Activated CD4-positive, alpha-beta T cell treated with anti-CD3 and anti-CD28 coated beads for 36 hours (primary cell): ENCODE measurements at regions of chr19 and their contacts with region 1.

Region 1: GRCh38 chr19:3970808-3971598 is at the start of gene DAPK3:
- DNase-seq: peak; percentile 97
- ATAC-seq: peak; percentile 95
- H3K4me3 Mint-ChIP-seq: peak within 1 kb of the TSS; percentile 83
- H3K27ac Mint-ChIP-seq: peak within 1 kb of the TSS; percentile 58
- H3K4me1 Mint-ChIP-seq: peaks cover 22% of the 10 kb centered on the region
- H3K27me3 Mint-ChIP-seq: no peaks in the 10 kb centered on the region
- total RNA-seq, gene DAPK3: 26.7 to 27.6 TPM

Region 2: DNA sequence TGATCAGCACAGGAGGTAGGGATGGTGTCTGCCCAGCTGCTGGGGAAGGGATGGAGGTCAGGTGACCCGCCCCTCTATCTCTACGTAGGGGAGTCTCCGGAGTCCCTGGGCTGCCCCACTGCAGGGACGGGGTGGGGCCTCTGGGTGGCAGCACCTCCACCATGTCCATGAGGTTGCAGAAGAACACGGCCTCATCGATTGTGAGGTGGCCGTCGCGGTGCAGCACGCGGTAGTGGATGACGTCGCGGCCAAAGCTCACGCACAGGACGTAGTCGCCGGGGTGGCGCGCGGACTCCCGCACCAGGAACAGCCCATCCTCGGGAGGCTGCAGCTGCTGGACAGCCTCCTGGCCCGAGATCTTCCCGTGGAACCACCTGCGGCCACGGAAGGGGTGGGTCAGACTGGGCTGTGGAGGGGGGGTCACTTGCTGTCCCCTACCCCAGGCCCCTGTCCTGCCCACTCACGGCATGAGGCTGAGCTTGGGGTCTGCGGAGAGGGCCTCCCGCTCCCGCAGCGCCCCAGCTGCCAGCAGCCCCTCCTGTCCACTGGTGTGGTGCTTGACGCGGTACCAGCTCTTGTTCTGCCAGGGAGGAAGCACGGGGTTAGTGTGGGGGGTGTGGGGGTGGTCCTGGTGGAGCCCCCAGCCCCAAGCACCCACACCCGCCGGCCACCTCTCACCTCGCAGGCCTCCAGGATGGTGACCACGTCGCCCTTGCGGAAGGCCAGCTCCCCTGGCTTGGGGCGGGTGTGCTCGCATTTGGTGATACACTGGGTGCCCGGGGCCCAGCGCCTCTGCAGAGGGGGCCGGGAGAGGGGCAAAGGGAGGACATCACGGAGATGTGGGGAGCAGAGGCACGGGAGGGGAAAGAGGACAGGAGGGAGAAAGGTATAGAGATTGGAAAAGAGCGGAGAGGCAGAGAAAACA is 187.1 kb before region 1 on chr19:
- CTCF ChIA-PET with region 1: no interaction called
- POLR2A ChIA-PET with region 1: no interaction called
- intact Hi-C with region 1: loop called in 1 of 2 experiments (anchors 5 kb)
- DNase-seq: peak; percentile 72
- ATAC-seq: peak; percentile 65
- H3K4me3 Mint-ChIP-seq: peak overlapping the region; percentile 80
- H3K27ac Mint-ChIP-seq: no peak overlapping the region
- H3K4me1 Mint-ChIP-seq: peaks cover 3% of the 10 kb centered on the region
- H3K27me3 Mint-ChIP-seq: no peaks in the 10 kb centered on the region

Region 3: GRCh38 chr19:4007021-4007835 is 36.2 kb after region 1 on chr19 and contains the start of gene PIAS4:
- CTCF ChIA-PET with region 1: no interaction called
- POLR2A ChIA-PET with region 1: no interaction called
- intact Hi-C with region 1: loop called in 1 of 2 experiments (anchors 1 kb)
- DNase-seq: peak; percentile 97
- ATAC-seq: peak; percentile 92
- H3K4me3 Mint-ChIP-seq: peak within 1 kb of the TSS; percentile 75
- H3K27ac Mint-ChIP-seq: peak within 1 kb of the TSS; percentile 71
- H3K4me1 Mint-ChIP-seq: peaks cover 27% of the 10 kb centered on the region
- H3K27me3 Mint-ChIP-seq: no peaks in the 10 kb centered on the region
- total RNA-seq, gene PIAS4: 23.0 to 37.3 TPM

Region 4: GRCh38 chr19:4052050-4052999 is 81.3 kb after region 1 on chr19:
- CTCF ChIA-PET with region 1: no interaction called
- POLR2A ChIA-PET with region 1: no interaction called
- intact Hi-C with region 1: no loop called
- DNase-seq: no peak
- ATAC-seq: no peak
- H3K4me3 Mint-ChIP-seq: no peak overlapping the region
- H3K27ac Mint-ChIP-seq: no peak overlapping the region
- H3K4me1 Mint-ChIP-seq: peaks cover 34% of the 10 kb centered on the region
- H3K27me3 Mint-ChIP-seq: no peaks in the 10 kb centered on the region

Region 5: DNA sequence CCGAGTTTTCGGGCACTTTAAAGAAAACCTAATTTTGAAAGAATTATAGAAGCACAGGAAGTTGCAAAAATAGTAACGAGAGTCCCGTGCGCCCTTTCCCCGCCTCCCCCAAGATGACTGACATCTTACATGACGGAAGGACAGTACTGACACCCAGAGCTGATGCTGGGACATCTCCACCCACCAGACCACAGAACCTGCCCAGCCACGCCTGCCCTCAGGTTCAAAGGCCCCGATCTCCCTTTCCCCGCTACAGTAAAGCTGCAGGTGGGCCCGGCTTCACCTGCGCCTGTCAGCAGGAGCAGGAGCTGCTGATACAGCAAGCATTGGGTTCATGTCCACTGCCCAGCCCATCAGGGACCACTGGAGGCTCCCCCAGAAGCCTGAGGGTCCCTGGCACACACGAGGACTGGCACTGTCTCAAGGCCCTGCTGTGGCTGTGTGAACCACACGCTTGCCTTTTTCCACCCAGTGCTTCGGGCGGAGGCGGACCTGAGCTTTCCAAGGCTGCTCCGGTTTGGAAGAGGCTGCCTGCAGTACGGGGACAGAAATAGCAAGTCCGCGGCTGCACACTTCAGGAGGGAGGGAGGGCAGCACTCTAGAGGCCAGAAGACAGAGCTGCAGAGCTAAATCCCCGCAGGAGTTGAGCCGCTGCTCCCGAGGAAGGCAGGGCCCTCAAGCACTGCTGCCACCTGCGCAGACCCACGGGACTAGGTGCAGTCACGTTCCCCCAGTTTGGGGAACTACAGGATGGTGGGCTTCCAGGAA is 144.2 kb after region 1 on chr19:
- CTCF ChIA-PET with region 1: no interaction called
- POLR2A ChIA-PET with region 1: interaction called, 13 read pairs
- intact Hi-C with region 1: no loop called
- DNase-seq: peak; percentile 77
- ATAC-seq: peak; percentile 98
- H3K4me3 Mint-ChIP-seq: no peak overlapping the region
- H3K27ac Mint-ChIP-seq: peak overlapping the region; percentile 75
- H3K4me1 Mint-ChIP-seq: peaks cover 17% of the 10 kb centered on the region
- H3K27me3 Mint-ChIP-seq: no peaks in the 10 kb centered on the region

Region 6: DNA sequence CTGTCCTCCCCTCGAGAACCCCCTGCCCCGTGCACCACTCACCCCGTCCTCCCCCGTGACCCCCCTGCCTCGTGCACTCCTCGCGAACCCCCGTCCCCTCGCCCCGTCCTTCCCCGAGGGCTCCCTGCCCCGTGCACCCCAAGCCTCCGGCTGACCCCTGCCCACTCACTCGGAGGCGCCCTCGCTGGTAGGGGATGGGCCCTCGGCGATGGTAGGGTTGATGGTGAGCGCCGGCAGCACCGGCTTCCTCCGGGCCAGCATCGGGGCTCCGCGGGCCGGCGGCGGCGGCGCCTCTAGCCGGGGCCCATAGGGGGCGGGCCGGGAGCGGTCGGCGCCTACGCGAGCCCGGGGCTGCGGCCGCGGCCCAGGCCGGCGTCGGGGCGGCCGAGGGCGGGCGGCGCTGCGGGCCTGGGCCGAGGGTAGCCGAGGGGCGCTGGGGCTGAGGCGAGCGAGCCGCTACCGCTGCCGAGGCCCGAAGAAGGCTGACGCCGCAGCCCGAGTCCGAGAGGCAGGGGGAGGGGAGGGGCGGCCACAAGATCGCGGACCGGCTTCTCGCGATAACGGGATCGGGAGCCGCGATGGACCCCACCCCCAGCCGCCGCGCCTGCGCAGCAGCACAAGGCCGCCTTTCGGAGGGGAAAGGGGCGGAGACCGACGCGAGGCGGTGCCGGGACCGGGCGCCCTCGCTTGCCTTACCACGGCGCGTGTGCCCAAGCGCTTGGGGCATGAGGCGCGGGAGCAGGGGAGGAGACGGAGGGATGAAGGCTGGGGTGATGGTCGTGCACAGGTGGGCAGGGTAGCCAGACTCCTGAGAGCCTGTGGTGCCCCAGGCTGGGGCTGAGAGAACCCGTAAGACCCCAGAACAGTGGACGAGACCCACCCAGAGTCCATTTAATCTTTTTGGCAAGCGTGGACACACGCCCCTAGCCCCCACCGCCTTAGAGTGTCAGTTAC is 152.9 kb after region 1 on chr19 and contains the start of gene MAP2K2:
- CTCF ChIA-PET with region 1: no interaction called
- POLR2A ChIA-PET with region 1: no interaction called
- intact Hi-C with region 1: loop called in 1 of 2 experiments (anchors 1 kb)
- DNase-seq: peak; percentile 98
- ATAC-seq: peak; percentile 96
- H3K4me3 Mint-ChIP-seq: peak within 1 kb of the TSS; percentile 97
- H3K27ac Mint-ChIP-seq: peak within 1 kb of the TSS; percentile 92
- H3K4me1 Mint-ChIP-seq: peaks cover 18% of the 10 kb centered on the region
- H3K27me3 Mint-ChIP-seq: no peaks in the 10 kb centered on the region
- total RNA-seq, gene MAP2K2: 108 to 133 TPM

Region 7: DNA sequence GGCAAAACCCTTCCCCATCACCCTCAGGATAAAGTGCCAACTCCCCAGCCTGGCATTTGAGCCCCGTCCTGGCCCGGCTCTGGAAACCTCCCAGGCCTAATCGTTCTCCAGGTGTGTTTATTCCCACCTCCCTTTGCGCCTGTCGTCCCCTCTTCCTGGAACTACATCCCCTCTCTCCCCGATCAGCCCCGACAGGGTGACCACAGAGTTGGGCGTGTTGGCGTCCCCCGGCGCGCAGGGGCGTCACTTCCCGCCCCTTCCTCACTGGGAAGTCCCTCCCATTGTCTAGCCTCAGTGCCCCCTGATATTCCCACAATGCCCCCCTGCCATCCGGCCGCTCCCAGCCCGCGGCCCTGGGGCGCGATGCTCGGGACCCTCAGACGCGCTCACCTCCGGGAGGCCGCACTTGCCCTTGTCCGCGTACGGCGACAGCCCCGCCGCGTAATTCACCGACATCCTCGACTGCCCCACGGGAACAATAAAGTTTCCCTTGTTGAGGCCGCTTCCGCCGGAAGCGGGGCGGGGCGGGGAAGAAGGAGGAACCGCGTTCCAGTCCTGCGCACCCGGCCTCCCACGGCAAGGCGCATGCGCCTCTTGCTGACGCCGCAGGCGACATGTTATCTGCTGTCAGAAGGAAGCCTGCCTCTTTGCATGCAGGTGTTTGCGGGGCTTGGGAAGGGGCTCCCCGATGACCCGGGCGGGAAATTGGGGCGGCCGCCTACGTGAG is 211.2 kb after region 1 on chr19 and contains the starts of genes ANKRD24 and SIRT6:
- CTCF ChIA-PET with region 1: no interaction called
- POLR2A ChIA-PET with region 1: no interaction called
- intact Hi-C with region 1: loop called in 1 of 2 experiments (anchors 1 kb)
- DNase-seq: peak; percentile 98
- ATAC-seq: peak; percentile 84
- H3K4me3 Mint-ChIP-seq: peak within 1 kb of the TSS; percentile 92
- H3K27ac Mint-ChIP-seq: peak within 1 kb of the TSS; percentile 93
- H3K4me1 Mint-ChIP-seq: peaks cover 30% of the 10 kb centered on the region
- H3K27me3 Mint-ChIP-seq: no peaks in the 10 kb centered on the region
- total RNA-seq, gene ANKRD24: 1.1 to 1.3 TPM
- total RNA-seq, gene SIRT6: 26.2 to 29.4 TPM

Region 8: DNA sequence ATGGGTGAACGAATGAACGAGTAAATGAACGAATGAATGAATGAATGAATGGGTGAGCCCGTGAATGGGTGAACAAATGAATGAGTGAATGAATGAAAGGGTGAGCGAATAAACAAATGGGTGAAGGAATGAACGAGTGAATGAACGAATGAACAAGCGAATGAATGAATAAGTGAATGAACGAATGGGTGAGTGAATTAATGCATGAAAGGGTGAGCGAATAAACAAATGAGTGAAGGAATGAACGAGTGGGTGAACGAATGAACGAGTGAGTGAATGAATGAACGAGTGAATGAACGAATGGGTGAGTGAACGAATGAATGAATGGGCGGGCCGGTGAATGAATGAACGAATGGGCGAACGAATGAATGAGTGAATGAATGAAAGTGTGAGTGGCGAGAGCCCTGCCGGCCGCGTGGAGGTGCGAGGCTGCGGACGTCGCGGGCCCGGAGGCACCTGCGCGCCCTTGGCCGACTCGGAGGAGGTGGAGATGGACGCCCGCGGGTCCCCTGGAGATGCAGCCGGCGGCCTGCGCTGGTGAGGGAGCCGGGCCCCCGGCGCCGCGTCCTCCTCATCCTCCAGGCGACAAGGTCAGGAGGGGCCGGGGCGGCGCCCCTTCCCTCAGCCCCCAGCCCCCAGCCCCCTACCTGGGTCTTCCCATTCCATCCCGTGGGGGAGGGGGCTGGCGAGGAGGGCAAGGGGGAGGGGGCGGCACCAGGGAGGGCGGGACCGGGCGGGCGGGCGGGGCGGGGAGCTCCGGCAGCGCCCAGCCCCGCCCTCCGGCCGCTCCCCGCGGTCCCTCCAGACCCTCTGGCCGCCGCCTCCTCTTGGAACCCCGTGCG is 226.8 kb after region 1 on chr19:
- CTCF ChIA-PET with region 1: no interaction called
- POLR2A ChIA-PET with region 1: no interaction called
- intact Hi-C with region 1: no loop called
- DNase-seq: peak; percentile 52
- ATAC-seq: peak; percentile 71
- H3K4me3 Mint-ChIP-seq: no peak overlapping the region
- H3K27ac Mint-ChIP-seq: no peak overlapping the region
- H3K4me1 Mint-ChIP-seq: peaks cover 8% of the 10 kb centered on the region
- H3K27me3 Mint-ChIP-seq: peaks cover 43% of the 10 kb centered on the region